PC-9 (cell line): ENCODE measurements at regions of chr20 and their contacts with region 1.

Region 1: DNA sequence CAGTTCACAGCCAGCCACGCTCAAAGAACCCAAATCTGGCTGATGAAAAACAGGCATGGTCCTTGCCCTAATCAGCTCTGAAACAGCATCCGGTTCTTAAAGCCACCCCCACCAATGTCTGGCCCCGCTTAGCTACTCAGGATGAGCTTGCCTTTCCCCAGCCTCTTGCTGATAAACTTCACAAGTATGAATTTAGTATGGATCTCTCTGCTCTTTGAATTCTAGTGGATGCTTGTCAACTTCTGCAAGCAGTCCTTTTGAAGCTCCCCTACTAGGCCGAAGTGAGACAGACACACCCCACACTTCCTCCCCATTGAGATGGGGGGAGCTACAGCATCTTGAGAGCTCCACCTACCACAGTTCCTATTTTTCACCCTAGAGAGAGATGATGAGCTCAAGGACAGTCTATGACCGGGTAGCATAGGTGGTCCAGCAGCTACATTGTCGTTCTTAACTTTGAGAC is 36.7 kb downstream of the EBF4 start:
- DNase-seq: no peak
- H3K4me3 ChIP-seq: no peak overlapping the region
- H3K27ac ChIP-seq: no peak overlapping the region
- H3K4me1 ChIP-seq: no peaks in the 10 kb centered on the region
- H3K27me3 ChIP-seq: peaks cover 94% of the 10 kb centered on the region
- CTCF ChIP-seq: no peak

Region 2: GRCh38 chr20:2680046-2680445 is 49.2 kb before region 1 on chr20:
- CTCF ChIA-PET with region 1: no interaction called
- POLR2A ChIA-PET with region 1: interaction called, 15 read pairs
- intact Hi-C with region 1: no loop called
- DNase-seq: no peak
- H3K4me3 ChIP-seq: no peak overlapping the region
- H3K27ac ChIP-seq: no peak overlapping the region
- H3K4me1 ChIP-seq: no peaks in the 10 kb centered on the region
- H3K27me3 ChIP-seq: peaks cover 21% of the 10 kb centered on the region
- CTCF ChIP-seq: no peak

Region 3: GRCh38 chr20:2814587-2815051 is 85.3 kb after region 1 on chr20 and contains the start of gene C20orf141:
- CTCF ChIA-PET with region 1: no interaction called
- POLR2A ChIA-PET with region 1: no interaction called
- intact Hi-C with region 1: no loop called
- DNase-seq: peak; percentile 89 to 92
- H3K4me3 ChIP-seq: no peak within 1 kb of the TSS
- H3K27ac ChIP-seq: peak within 1 kb of the TSS; percentile 63
- H3K4me1 ChIP-seq: peaks cover 28% of the 10 kb centered on the region
- H3K27me3 ChIP-seq: no peaks in the 10 kb centered on the region
- CTCF ChIP-seq: no peak
- total RNA-seq, gene C20orf141: not detected in 2 replicates

Region 4: DNA sequence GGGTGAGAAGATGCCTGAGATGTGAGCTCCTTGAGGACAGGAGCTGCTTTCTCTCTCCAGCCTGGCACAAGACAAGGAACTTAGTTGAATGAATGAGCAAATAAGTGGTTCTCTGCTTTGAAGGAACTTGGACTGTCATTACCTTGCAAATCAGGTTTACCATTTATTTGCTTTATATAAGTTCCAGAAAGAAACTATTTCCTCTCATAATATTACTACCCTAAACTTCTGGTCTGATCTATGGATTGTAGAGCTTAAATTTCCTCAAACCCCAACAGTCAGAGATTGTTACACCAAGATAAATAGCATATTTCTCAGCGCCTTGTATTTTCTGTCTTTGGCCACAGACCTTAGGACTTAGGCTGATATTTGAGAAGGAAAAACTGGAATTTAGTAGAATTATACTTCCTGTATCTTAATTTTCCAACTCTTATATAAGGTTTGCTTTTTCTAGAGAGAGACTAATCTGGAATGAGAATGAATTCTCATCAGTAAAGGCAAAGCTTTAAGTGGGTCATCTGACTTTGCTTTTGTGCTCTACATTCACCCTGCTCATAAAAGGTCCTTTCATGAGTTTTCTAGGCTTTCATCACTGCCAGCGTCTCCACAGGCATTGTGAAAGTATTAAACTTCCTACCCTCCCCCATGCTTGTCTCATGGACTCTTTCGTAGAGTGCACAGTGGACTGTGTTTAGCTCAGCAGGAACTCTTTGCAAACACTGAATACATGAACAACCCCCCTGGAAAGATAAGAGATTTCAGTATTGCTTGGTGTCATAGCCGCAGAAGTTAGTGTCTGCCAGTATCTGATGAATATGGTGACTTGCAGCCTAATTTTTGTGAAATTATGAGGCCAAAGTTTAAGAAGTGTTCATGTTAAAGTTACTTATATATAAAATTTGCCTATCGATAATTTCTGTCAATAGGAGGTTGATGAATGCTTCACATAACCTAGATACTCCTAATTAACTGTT is 218.0 kb after region 1 on chr20:
- CTCF ChIA-PET with region 1: no interaction called
- POLR2A ChIA-PET with region 1: no interaction called
- intact Hi-C with region 1: no loop called
- DNase-seq: no peak
- H3K4me3 ChIP-seq: no peak overlapping the region
- H3K27ac ChIP-seq: no peak overlapping the region
- H3K4me1 ChIP-seq: no peaks in the 10 kb centered on the region
- H3K27me3 ChIP-seq: no peaks in the 10 kb centered on the region
- CTCF ChIP-seq: no peak